Panc1 (cell line): ENCODE measurements at regions of chr13 and their contacts with region 1.

Region 1: GRCh38 chr13:62357887-62358645 is 942.4 kb upstream of the PCDH20 start:
- DNase-seq: peak; percentile 32
- ATAC-seq: peak; percentile 77; the same call in 1 of the 2 replicates
- H3K4me3 ChIP-seq: no peak overlapping the region
- H3K27ac ChIP-seq: no peak overlapping the region
- H3K4me1 ChIP-seq: no peaks in the 10 kb centered on the region
- H3K27me3 ChIP-seq: no peaks in the 10 kb centered on the region
- CTCF ChIP-seq: peak; percentile 62

Region 2: DNA sequence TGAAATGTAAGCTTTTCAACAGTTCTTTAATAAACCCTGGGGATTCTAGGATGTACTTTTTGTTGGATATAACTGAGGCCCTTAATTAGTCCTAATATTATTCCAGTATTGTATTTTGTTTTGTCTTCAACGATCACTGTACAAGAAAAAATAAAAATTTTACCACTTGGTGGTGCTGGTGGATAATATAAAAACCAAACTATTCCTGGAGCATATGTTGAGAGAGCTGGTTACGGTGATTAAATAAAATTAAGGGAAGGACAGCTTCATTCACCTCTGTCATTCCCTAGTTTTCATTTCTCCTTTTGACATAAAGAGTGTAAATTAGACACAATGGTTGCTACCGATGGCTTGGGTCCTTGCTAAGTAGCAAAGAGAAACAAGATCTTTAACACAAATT is 343.8 kb before region 1 on chr13:
- CTCF ChIA-PET with region 1: no interaction called
- POLR2A ChIA-PET with region 1: no interaction called
- in situ Hi-C with region 1: no loop called
- intact Hi-C with region 1: loop called (anchors 10 kb)
- DNase-seq: peak; percentile 8
- ATAC-seq: no peak
- H3K4me3 ChIP-seq: peak overlapping the region; percentile 9 to 12; a peak in 1 of 4 replicates
- H3K27ac ChIP-seq: no peak overlapping the region
- H3K4me1 ChIP-seq: no peaks in the 10 kb centered on the region
- H3K27me3 ChIP-seq: no peaks in the 10 kb centered on the region
- CTCF ChIP-seq: peak; percentile 26; the same call in 1 of the 2 replicates

Region 3: DNA sequence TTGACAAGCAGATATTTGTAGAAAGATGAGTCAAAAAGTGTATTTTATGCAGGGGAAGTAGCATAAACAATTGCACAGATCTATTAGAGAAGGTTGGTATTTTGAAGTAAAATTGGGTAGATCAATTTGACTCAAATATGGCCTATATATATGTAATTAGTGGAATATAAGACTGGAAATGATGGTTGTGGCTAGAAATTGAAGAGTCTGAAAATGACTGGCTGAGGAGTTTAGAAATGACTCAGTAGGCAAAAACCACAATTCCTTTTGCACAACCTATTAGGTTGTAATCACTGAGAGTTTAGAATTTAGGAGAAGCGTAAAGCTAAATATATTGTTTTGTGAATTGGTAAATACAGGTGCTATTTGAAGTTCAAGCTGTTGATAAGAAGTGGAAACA is 319.9 kb before region 1 on chr13:
- CTCF ChIA-PET with region 1: no interaction called
- POLR2A ChIA-PET with region 1: no interaction called
- in situ Hi-C with region 1: loop called (anchors 25 kb)
- intact Hi-C with region 1: no loop called
- DNase-seq: no peak
- ATAC-seq: no peak
- H3K4me3 ChIP-seq: no peak overlapping the region
- H3K27ac ChIP-seq: no peak overlapping the region
- H3K4me1 ChIP-seq: peaks cover 3% of the 10 kb centered on the region; the same call in 1 of the 2 replicates
- H3K27me3 ChIP-seq: no peaks in the 10 kb centered on the region
- CTCF ChIP-seq: no peak

Region 4: GRCh38 chr13:62119739-62120700 is 238.0 kb before region 1 on chr13:
- CTCF ChIA-PET with region 1: no interaction called
- POLR2A ChIA-PET with region 1: no interaction called
- in situ Hi-C with region 1: no loop called
- intact Hi-C with region 1: loop called (anchors 5 kb)
- DNase-seq: no peak
- ATAC-seq: no peak
- H3K4me3 ChIP-seq: no peak overlapping the region
- H3K27ac ChIP-seq: no peak overlapping the region
- H3K4me1 ChIP-seq: no peaks in the 10 kb centered on the region
- H3K27me3 ChIP-seq: no peaks in the 10 kb centered on the region
- CTCF ChIP-seq: peak; percentile 30; the same call in 1 of the 2 replicates

Region 5: GRCh38 chr13:62320129-62321108 is 37.6 kb before region 1 on chr13:
- CTCF ChIA-PET with region 1: interaction called, 7 read pairs
- POLR2A ChIA-PET with region 1: no interaction called
- in situ Hi-C with region 1: no loop called
- intact Hi-C with region 1: loop called (anchors 2 kb)
- DNase-seq: peak; percentile 12
- ATAC-seq: no peak
- H3K4me3 ChIP-seq: no peak overlapping the region
- H3K27ac ChIP-seq: no peak overlapping the region
- H3K4me1 ChIP-seq: no peaks in the 10 kb centered on the region
- H3K27me3 ChIP-seq: no peaks in the 10 kb centered on the region
- CTCF ChIP-seq: no peak